Vagina (tissue), 2 donors: ENCODE measurements at regions of chr5 and their contacts with region 1.

Region 1: GRCh38 chr5:120199559-120199958 is 264.5 kb upstream of the PRR16 start:
- DNase-seq: no peak
- H3K4me3 ChIP-seq: no peak overlapping the region
- H3K27ac ChIP-seq: no peak overlapping the region
- H3K4me1 ChIP-seq: no peaks in the 10 kb centered on the region
- H3K27me3 ChIP-seq: no peaks in the 10 kb centered on the region
- CTCF ChIP-seq: no peak
- POLR2A ChIP-seq: no peak

Region 2: DNA sequence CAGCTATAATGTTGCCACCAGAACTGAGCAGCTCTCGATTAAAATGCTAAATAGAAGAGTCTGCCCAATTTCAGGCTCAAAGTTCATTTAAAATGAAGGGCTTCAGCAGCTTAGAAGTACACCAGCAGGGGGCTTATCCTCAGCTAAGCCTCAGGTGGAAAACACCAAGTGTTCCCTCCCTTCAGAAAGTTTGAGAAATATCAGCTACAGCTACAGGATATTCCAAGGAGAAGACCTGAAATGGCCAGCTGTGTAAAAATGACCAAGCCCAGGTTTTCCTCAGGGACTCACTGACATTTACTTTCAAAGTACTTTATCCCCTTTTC is 1606.6 kb before region 1 on chr5:
- intact Hi-C with region 1: no loop called
- DNase-seq: no peak
- H3K4me3 ChIP-seq: no peak overlapping the region
- H3K27ac ChIP-seq: no peak overlapping the region
- H3K4me1 ChIP-seq: no peaks in the 10 kb centered on the region
- H3K27me3 ChIP-seq: no peaks in the 10 kb centered on the region
- CTCF ChIP-seq: no peak
- POLR2A ChIP-seq: no peak

Region 3: DNA sequence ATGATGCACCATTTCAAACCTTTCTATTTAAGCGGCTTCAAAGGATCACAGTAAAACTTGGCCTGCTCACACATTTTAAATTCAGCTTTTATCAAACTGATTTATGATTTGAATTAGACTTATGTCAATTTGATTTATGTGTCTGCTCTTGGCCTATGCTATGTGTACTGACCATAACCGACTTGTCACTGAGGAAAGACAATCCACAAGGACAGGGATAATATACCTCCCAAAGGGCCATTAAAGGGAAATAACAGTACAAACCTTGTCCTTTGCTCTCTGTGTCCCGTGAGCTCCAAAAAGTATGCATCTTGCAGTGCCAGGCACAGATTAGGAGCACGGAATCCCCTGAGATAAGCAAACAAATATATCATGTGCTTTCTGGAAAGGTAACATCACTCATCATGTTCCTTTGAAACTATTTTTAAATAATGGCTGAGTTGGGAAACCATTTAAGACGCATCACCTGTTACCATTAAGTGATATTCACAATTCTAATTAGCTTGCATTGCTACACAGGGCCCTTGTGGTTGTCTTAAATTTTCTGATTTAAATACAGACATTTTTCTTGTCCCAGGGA is 1620.2 kb after region 1 on chr5:
- intact Hi-C with region 1: loop called (anchors 5 kb)
- DNase-seq: no peak
- H3K4me3 ChIP-seq: no peak overlapping the region
- H3K27ac ChIP-seq: no peak overlapping the region
- H3K4me1 ChIP-seq: no peaks in the 10 kb centered on the region
- H3K27me3 ChIP-seq: no peaks in the 10 kb centered on the region
- CTCF ChIP-seq: no peak
- POLR2A ChIP-seq: no peak